MCF 10A (cell line): ENCODE measurements at regions of chr22 and their contacts with region 1.

Region 1: DNA sequence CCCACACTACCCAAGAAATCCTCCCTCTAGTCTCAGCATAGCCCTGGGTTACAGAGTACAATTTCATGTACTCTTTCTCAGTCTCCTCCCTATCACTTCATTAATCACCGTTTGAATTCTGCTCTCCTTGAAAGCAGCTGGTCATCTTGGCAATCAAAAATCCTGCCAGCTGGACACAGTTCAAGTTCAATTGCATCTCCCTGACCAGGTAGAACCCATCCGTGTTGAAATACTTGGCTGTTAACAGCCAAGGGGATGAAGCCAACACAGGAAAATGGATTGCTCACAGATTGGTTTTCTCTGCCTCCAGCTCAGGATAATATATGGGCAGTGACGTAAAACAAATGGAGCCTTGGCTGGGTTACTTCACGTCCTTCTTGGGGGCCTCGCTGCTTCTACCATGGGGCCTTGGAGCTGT is 55.1 kb upstream of the GRK3 start:
- DNase-seq: peak; percentile 94
- H3K4me3 Mint-ChIP-seq: no peak overlapping the region
- H3K27ac Mint-ChIP-seq: no peak overlapping the region
- H3K4me1 Mint-ChIP-seq: peaks cover 6% of the 10 kb centered on the region
- H3K27me3 Mint-ChIP-seq: no peaks in the 10 kb centered on the region
- CTCF ChIP-seq: no peak

Region 2: DNA sequence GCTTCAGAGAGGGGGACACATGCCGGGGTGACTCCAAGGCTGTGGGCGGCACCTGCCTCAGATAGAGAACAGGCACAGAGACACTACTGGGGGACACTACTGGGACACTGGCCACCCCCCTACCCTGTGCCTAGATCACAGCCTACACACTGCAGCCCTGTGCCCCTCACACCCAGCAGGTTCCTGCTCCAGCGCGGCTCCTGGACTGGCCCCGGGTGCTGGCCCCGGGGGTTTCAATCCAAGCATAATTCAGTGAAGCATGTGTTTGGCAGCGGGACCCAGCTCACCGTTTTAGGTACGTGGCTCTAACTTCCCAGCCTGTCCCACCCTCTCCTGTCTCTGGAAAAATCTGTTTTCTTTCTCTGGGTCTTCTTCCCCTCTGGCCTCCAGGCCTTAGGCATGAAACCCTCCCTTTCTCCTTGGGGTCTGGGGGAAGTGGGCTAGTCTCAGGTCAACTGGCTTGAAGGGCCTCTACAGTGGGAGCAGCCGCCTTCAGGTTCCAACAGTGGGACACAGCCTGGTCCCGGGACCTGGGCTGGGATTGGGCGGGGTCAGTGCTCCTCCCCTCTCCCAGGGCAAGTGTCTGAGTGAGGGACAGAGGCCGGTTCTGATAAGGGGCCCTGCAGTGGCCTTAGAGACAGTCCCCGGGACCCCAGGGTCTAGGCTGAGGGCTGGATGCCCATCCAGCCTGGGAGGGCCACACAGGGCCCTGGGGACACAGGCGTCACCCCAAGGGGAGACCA is 191.1 kb before region 1 on chr22:
- CTCF ChIA-PET with region 1: no interaction called
- POLR2A ChIA-PET with region 1: no interaction called
- intact Hi-C with region 1: no loop called
- DNase-seq: no peak
- H3K4me3 Mint-ChIP-seq: no peak overlapping the region
- H3K27ac Mint-ChIP-seq: no peak overlapping the region
- H3K4me1 Mint-ChIP-seq: no peaks in the 10 kb centered on the region
- H3K27me3 Mint-ChIP-seq: peaks cover 11% of the 10 kb centered on the region
- CTCF ChIP-seq: no peak

Region 3: GRCh38 chr22:25494774-25495173 is 14.6 kb before region 1 on chr22:
- CTCF ChIA-PET with region 1: no interaction called
- POLR2A ChIA-PET with region 1: interaction called, 12 read pairs
- intact Hi-C with region 1: no loop called
- DNase-seq: no peak
- H3K4me3 Mint-ChIP-seq: no peak overlapping the region
- H3K27ac Mint-ChIP-seq: no peak overlapping the region
- H3K4me1 Mint-ChIP-seq: peaks cover 5% of the 10 kb centered on the region
- H3K27me3 Mint-ChIP-seq: peaks cover 31% of the 10 kb centered on the region
- CTCF ChIP-seq: no peak

Region 4: GRCh38 chr22:25564320-25564978 is 55.1 kb after region 1 on chr22 and contains the start of gene GRK3:
- CTCF ChIA-PET with region 1: interaction called, 4 read pairs
- POLR2A ChIA-PET with region 1: interaction called, 18 read pairs
- intact Hi-C with region 1: no loop called
- DNase-seq: peak; percentile 75
- H3K4me3 Mint-ChIP-seq: peak within 1 kb of the TSS; percentile 77
- H3K27ac Mint-ChIP-seq: peak within 1 kb of the TSS; percentile 3
- H3K4me1 Mint-ChIP-seq: peaks cover 5% of the 10 kb centered on the region
- H3K27me3 Mint-ChIP-seq: no peaks in the 10 kb centered on the region
- CTCF ChIP-seq: no peak
- total RNA-seq, gene GRK3: 6.5 and 7.9 TPM in 2 replicates

Region 5: GRCh38 chr22:25739659-25740344 is 230.4 kb after region 1 on chr22:
- CTCF ChIA-PET with region 1: no interaction called
- POLR2A ChIA-PET with region 1: no interaction called
- intact Hi-C with region 1: no loop called
- DNase-seq: no peak
- H3K4me3 Mint-ChIP-seq: no peak overlapping the region
- H3K27ac Mint-ChIP-seq: no peak overlapping the region
- H3K4me1 Mint-ChIP-seq: no peaks in the 10 kb centered on the region
- H3K27me3 Mint-ChIP-seq: no peaks in the 10 kb centered on the region
- CTCF ChIP-seq: no peak